ENCODE measurements at regions of chr11 and their contacts with region 1.

Region 1: DNA sequence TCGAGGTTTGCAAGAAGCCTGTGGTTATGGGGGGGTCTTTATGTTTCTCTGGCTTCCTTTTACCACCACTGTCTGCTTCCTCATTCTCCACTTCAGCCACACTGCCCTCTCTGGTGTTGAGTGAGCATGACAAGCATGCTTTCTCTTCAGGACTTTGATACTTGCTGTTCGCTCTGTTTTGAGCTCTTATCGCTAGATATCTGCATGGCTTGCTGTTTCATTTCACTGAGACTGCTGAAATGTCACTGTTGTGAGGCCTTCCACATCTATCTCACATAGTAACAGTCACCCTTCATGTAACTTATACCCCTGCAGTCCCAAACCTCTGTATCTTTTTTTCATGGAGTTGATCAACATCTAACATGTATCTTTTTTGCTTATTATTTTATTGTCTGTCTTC is 59.8 kb downstream of the TMEM135 start:
- DNase-seq: peak; percentile 87
- H3K4me3 ChIP-seq: no peak overlapping the region
- H3K4me3 Mint-ChIP-seq: no peak overlapping the region
- H3K27ac Mint-ChIP-seq: peak overlapping the region; percentile 26
- H3K4me1 ChIP-seq: peaks cover 12% of the 10 kb centered on the region
- H3K4me1 Mint-ChIP-seq: peaks cover 10% of the 10 kb centered on the region
- H3K27me3 ChIP-seq: no peaks in the 10 kb centered on the region
- H3K27me3 Mint-ChIP-seq: no peaks in the 10 kb centered on the region
- CTCF ChIP-seq: peak; percentile 96 to 98

Region 2: GRCh38 chr11:86291466-86292262 is 805.9 kb before region 1 on chr11:
- CTCF ChIA-PET with region 1: no interaction called
- POLR2A ChIA-PET with region 1: no interaction called
- intact Hi-C with region 1: no loop called
- DNase-seq: peak; percentile 63 to 82
- H3K4me3 ChIP-seq: no peak overlapping the region
- H3K4me3 Mint-ChIP-seq: no peak overlapping the region
- H3K27ac Mint-ChIP-seq: no peak overlapping the region
- H3K4me1 ChIP-seq: 0 out of 2 replicates have a peak, but pooled peaks cover 4% of the 10 kb centered on the region
- H3K4me1 Mint-ChIP-seq: no peaks in the 10 kb centered on the region
- H3K27me3 ChIP-seq: no peaks in the 10 kb centered on the region
- H3K27me3 Mint-ChIP-seq: no peaks in the 10 kb centered on the region
- CTCF ChIP-seq: peak; percentile 92 to 98

Region 3: GRCh38 chr11:86938900-86939880 is 158.4 kb before region 1 on chr11:
- CTCF ChIA-PET with region 1: interaction called, 7 read pairs
- POLR2A ChIA-PET with region 1: no interaction called
- intact Hi-C with region 1: loop called (anchors 1 kb)
- DNase-seq: peak in 1 of 2 experiments; percentile 75
- H3K4me3 ChIP-seq: no peak overlapping the region
- H3K4me3 Mint-ChIP-seq: peak overlapping the region; percentile 60
- H3K27ac Mint-ChIP-seq: peak overlapping the region; percentile 84
- H3K4me1 ChIP-seq: peaks cover 51% of the 10 kb centered on the region
- H3K4me1 Mint-ChIP-seq: peaks cover 52% of the 10 kb centered on the region
- H3K27me3 ChIP-seq: no peaks in the 10 kb centered on the region
- H3K27me3 Mint-ChIP-seq: no peaks in the 10 kb centered on the region
- CTCF ChIP-seq: peak; percentile 79 to 83

Region 4: DNA sequence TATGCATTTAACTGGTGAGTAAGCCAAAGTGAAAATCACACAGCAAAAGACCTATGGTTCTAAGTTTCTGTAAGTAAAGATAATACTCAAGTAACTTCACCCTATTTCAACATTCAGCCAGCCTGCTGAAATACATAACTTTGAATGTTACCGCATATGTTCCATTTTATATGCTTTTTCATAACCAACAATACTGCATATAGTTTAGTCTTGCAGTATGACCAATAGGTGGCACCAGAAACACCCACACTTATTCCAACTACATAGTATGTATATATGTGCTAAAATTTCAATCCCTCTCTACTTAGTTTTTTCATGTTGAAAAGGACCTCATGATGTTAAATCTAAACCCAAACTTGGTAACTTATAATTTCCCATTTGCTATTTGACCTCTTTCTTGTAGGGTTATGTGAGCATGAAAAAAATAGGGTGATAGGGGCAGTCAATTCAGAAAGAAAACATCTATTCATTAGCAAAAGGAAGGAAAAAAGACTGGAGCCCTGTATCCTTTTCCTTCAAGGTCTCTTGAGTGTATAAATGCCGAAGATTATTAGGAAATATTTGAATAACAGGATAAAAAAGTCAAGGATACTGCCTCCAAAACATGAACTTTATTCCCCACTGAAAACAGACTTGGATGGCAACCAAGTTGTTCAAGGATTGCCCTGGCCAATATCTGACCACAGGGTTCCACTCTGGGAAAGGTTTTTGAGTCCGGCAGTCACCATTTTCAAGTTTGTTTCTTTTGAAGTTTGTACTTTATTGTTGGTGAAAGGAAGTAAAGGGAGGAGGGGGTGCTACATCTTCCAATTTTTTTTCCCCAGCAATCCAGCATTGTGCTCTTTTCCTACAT is 118.6 kb before region 1 on chr11:
- CTCF ChIA-PET with region 1: no interaction called
- POLR2A ChIA-PET with region 1: no interaction called
- intact Hi-C with region 1: loop called (anchors 5 kb)
- DNase-seq: peak in 1 of 2 experiments; percentile 61
- H3K4me3 ChIP-seq: no peak overlapping the region
- H3K4me3 Mint-ChIP-seq: no peak overlapping the region
- H3K27ac Mint-ChIP-seq: no peak overlapping the region
- H3K4me1 ChIP-seq: peaks cover 10% of the 10 kb centered on the region
- H3K4me1 Mint-ChIP-seq: peaks cover 31% of the 10 kb centered on the region
- H3K27me3 ChIP-seq: no peaks in the 10 kb centered on the region
- H3K27me3 Mint-ChIP-seq: no peaks in the 10 kb centered on the region
- CTCF ChIP-seq: peak; percentile 84 to 87

Region 5: DNA sequence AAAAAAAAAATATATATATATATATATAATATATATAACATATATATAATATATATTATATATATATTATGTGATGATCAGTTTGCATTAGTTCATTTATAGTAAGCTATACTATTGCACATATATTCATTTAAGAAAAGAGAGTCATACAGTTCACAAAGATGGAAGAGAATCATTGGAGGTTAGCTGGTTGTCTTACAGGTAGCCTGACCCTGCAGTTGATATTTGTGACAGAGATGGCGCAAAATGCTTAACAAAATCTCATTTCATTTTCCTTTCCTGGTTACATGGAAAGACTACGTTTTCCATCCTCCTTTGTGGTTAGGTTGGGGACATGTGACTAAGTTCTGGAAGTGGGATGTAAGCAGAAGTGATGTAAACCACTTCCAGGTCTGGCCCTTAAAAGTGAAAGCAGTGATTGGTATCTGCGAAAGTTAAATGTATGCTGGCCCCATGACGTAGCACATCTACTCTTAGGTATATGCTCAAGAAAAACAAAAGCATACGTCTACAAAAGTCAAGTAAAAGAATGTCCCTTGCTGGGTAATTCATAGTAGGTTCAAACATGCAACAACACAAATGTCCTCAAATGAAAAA is 67.0 kb before region 1 on chr11:
- CTCF ChIA-PET with region 1: interaction called, 7 read pairs
- POLR2A ChIA-PET with region 1: no interaction called
- intact Hi-C with region 1: loop called (anchors 2 kb)
- DNase-seq: peak in 1 of 2 experiments; percentile 47
- H3K4me3 ChIP-seq: no peak overlapping the region
- H3K4me3 Mint-ChIP-seq: no peak overlapping the region
- H3K27ac Mint-ChIP-seq: no peak overlapping the region
- H3K4me1 ChIP-seq: peaks cover 25% of the 10 kb centered on the region
- H3K4me1 Mint-ChIP-seq: peaks cover 34% of the 10 kb centered on the region
- H3K27me3 ChIP-seq: no peaks in the 10 kb centered on the region
- H3K27me3 Mint-ChIP-seq: no peaks in the 10 kb centered on the region
- CTCF ChIP-seq: no peak

Region 6: DNA sequence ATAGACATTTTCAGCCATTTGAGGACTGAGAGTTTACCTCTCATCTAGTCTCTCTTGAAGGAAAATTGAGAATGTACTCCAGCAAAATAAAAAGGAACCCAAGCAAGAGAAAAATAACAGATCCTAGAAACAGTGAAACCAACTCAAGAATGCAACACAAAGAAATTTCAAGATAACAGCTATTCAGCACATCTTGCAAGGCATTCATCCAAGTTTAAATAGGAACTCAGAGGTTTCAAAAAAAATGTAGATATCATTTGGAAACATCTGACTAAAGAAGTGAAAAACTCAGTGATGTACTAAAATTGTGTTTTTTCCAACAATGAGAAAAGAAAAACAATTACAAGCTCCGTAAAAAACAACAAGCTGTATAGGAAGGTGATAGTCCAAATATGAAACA is 16.5 kb after region 1 on chr11:
- CTCF ChIA-PET with region 1: interaction called, 11 read pairs
- POLR2A ChIA-PET with region 1: no interaction called
- intact Hi-C with region 1: no loop called
- DNase-seq: no peak
- H3K4me3 ChIP-seq: no peak overlapping the region
- H3K4me3 Mint-ChIP-seq: no peak overlapping the region
- H3K27ac Mint-ChIP-seq: no peak overlapping the region
- H3K4me1 ChIP-seq: peaks cover 2% of the 10 kb centered on the region; the same call in 1 of the 2 replicates
- H3K4me1 Mint-ChIP-seq: peaks cover 14% of the 10 kb centered on the region
- H3K27me3 ChIP-seq: no peaks in the 10 kb centered on the region
- H3K27me3 Mint-ChIP-seq: no peaks in the 10 kb centered on the region
- CTCF ChIP-seq: no peak

Region 7: GRCh38 chr11:87203907-87204602 is 106.5 kb after region 1 on chr11:
- CTCF ChIA-PET with region 1: no interaction called
- POLR2A ChIA-PET with region 1: no interaction called
- intact Hi-C with region 1: no loop called
- DNase-seq: no peak
- H3K4me3 ChIP-seq: no peak overlapping the region
- H3K4me3 Mint-ChIP-seq: no peak overlapping the region
- H3K27ac Mint-ChIP-seq: peak overlapping the region; percentile 67
- H3K4me1 ChIP-seq: peaks cover 12% of the 10 kb centered on the region
- H3K4me1 Mint-ChIP-seq: peaks cover 13% of the 10 kb centered on the region
- H3K27me3 ChIP-seq: no peaks in the 10 kb centered on the region
- H3K27me3 Mint-ChIP-seq: no peaks in the 10 kb centered on the region
- CTCF ChIP-seq: no peak

Region 8: DNA sequence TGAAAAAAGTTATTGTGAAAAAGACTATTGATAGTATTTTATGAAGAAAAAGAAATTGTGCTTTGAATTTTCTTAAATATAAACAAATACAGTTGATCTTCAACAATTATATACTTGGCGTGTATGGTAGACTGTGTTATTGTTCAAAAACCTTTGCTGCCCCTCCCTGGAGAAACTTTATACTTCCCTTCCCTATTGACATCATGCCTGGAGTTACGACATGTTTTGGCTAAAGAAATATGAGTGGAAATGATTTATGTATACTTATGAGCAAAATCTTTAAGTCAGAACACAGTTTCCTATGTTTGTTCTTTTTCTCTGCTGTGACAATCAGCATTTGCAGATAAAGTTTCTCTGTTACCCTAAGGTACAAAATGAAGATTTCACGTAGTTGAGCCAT is 183.9 kb after region 1 on chr11:
- CTCF ChIA-PET with region 1: no interaction called
- POLR2A ChIA-PET with region 1: no interaction called
- intact Hi-C with region 1: loop called (anchors 1 kb)
- DNase-seq: peak in 1 of 2 experiments; percentile 39
- H3K4me3 ChIP-seq: no peak overlapping the region
- H3K4me3 Mint-ChIP-seq: no peak overlapping the region
- H3K27ac Mint-ChIP-seq: no peak overlapping the region
- H3K4me1 ChIP-seq: 0 out of 2 replicates have a peak, but pooled peaks cover 7% of the 10 kb centered on the region
- H3K4me1 Mint-ChIP-seq: peaks cover 5% of the 10 kb centered on the region
- H3K27me3 ChIP-seq: no peaks in the 10 kb centered on the region
- H3K27me3 Mint-ChIP-seq: no peaks in the 10 kb centered on the region
- CTCF ChIP-seq: no peak

Region 9: GRCh38 chr11:88494848-88495247 is 1397.3 kb after region 1 on chr11:
- CTCF ChIA-PET with region 1: no interaction called
- POLR2A ChIA-PET with region 1: no interaction called
- intact Hi-C with region 1: no loop called
- DNase-seq: no peak
- H3K4me3 ChIP-seq: no peak overlapping the region
- H3K4me3 Mint-ChIP-seq: no peak overlapping the region
- H3K27ac Mint-ChIP-seq: no peak overlapping the region
- H3K4me1 ChIP-seq: no peaks in the 10 kb centered on the region
- H3K4me1 Mint-ChIP-seq: peaks cover 6% of the 10 kb centered on the region
- H3K27me3 ChIP-seq: no peaks in the 10 kb centered on the region
- H3K27me3 Mint-ChIP-seq: peaks cover 3% of the 10 kb centered on the region
- CTCF ChIP-seq: peak in 1 of 2 experiments; percentile 11

Measured in Caco-2 (cell line).